ENCODE measurements at regions of chr6 and their contacts with region 1.

Region 1: DNA sequence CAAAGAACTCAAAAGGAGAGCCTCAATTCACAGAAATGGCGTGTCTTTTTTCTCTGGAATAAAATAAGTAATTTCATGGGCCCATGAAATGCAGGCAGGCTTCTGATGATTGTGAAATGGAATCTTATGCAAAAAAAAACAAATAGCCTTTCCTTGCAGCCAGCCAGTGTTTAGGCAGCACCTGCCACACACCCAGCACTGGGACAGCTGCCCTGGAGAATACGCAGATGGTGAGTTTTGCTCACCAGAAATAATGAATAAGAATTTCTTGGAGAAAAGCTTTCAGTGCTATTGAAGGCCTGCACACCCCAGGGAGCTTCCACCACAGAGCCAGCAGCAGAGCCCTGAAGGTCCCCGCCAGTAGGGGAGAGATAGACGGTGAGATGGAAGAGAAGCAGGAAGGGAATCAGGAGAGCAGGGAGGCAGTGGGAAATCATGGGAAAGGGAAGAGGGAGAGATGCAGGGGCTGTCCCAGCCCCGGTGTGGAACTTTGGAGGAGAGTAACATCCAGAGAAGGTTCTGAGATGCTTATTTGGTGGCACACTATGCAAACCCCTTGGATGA is 54.9 kb downstream of the PXDC1 start:
- DNase-seq: no peak
- ATAC-seq: no peak
- H3K4me3 ChIP-seq: no peak overlapping the region
- H3K27ac ChIP-seq: no peak overlapping the region
- H3K4me1 ChIP-seq: no peaks in the 10 kb centered on the region
- H3K27me3 ChIP-seq: no peaks in the 10 kb centered on the region
- CTCF ChIP-seq: no peak

Region 2: DNA sequence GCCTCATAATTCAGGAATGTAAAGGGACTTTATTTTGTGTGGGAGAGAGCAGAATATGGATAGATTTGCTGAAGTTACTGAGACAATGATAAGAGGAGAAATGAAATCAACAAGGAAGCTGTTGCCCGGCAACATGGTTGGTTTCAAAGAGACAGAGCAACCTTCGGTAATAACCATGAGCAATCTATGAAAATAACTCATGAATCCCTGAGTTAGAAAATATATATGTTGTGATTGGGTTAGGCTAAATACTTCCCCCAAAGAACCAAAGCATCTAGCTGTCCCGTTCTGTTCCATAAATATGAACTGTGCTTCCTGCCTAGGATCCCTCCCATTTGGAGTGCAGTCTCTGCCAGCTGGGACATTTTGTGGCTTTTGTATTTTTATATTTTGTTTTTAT is 878.0 kb before region 1 on chr6:
- CTCF ChIA-PET with region 1: interaction called, 12 read pairs
- POLR2A ChIA-PET with region 1: no interaction called
- in situ Hi-C with region 1: no loop called
- intact Hi-C with region 1: no loop called
- DNase-seq: no peak
- ATAC-seq: no peak
- H3K4me3 ChIP-seq: no peak overlapping the region
- H3K27ac ChIP-seq: peak overlapping the region; percentile 76
- H3K4me1 ChIP-seq: peaks cover 16% of the 10 kb centered on the region
- H3K27me3 ChIP-seq: no peaks in the 10 kb centered on the region
- CTCF ChIP-seq: no peak

Region 3: DNA sequence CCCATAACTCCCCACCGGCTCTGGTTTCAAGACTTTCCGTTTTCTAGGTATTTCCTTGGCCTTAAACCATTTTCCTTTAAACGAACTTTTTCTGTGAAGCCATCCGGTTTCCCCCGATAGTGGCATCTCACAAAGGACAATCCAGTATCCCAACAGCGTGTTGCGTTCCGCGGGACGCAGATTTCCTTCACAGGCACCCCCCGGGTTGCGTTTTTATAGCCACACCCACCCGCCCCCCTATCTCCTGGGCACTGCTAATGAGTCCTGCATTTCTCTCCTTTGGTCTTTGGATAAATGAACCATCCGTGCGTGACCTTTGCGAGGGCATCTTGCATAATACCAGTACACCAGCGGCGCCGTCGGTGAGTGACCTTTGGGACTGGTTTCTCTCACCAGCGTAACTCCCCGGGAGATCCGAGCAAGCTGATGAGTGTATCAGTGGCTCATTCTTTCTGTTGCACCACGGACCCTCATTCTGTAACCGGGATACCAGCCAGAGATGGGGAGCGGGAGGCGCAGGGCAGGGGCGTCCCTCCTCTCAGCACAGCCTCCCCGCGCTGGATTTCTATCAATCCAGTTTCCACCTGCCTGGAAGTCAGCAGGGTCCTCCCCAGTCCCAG is 697.5 kb before region 1 on chr6:
- CTCF ChIA-PET with region 1: no interaction called
- POLR2A ChIA-PET with region 1: no interaction called
- in situ Hi-C with region 1: no loop called
- intact Hi-C with region 1: no loop called
- DNase-seq: no peak
- ATAC-seq: peak; percentile 55
- H3K4me3 ChIP-seq: peak overlapping the region; percentile 69 to 92
- H3K27ac ChIP-seq: peak overlapping the region; percentile 74
- H3K4me1 ChIP-seq: peaks cover 8% of the 10 kb centered on the region
- H3K27me3 ChIP-seq: no peaks in the 10 kb centered on the region
- CTCF ChIP-seq: no peak

Region 4: GRCh38 chr6:3294921-3295871 is 401.4 kb before region 1 on chr6:
- CTCF ChIA-PET with region 1: no interaction called
- POLR2A ChIA-PET with region 1: interaction called, 19 read pairs
- in situ Hi-C with region 1: no loop called
- intact Hi-C with region 1: no loop called
- DNase-seq: no peak
- ATAC-seq: peak; percentile 60; the same call in 1 of the 2 replicates
- H3K4me3 ChIP-seq: no peak overlapping the region
- H3K27ac ChIP-seq: no peak overlapping the region
- H3K4me1 ChIP-seq: peaks cover 15% of the 10 kb centered on the region
- H3K27me3 ChIP-seq: no peaks in the 10 kb centered on the region
- CTCF ChIP-seq: no peak